Heart left ventricle (tissue), 16 donors: ENCODE measurements at regions of chrX and their contacts with region 1.

Region 1: DNA sequence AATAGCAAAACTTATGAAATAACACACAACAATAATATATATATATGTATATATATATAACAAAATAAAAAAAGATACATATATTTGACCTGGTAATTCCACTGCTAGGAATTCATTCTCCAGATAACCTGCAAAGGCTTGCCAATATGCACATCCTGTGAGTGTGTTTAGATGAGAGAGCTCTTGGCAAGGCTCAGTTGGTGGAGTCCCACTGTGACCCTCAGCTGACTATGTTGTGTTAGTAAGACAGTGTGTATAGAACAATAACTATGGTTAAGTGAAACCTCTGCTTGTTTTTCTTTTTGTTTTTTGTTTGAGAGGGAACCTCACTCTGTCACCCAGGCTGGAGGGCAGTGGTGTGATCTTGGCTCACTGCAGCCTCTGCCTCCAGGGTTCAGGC is 39.5 kb upstream of the RBMX start:
- DNase-seq: no peak
- ATAC-seq: peak in 2 of 4 donors; percentile 48 to 49
- H3K4me3 ChIP-seq: no peak overlapping the region
- H3K27ac ChIP-seq: no peak overlapping the region
- H3K4me1 ChIP-seq: peaks cover 0 to 3% (median 0%) of the 10 kb centered on the region in 12 donors
- H3K27me3 ChIP-seq: no peaks in the 10 kb centered on the region
- CTCF ChIP-seq: no peak
- POLR2A ChIP-seq: no peak

Region 2: GRCh38 chrX:136608295-136609171 is 311.5 kb before region 1 on chrX:
- intact Hi-C with region 1: loop called in 4 of 10 experiments (anchors 10 kb)
- DNase-seq: peak; percentile 8 to 62 (median 33)
- ATAC-seq: peak in 2 of 4 donors; percentile 51 to 55
- H3K4me3 ChIP-seq: no peak overlapping the region
- H3K27ac ChIP-seq: no peak overlapping the region
- H3K4me1 ChIP-seq: no peaks in the 10 kb centered on the region
- H3K27me3 ChIP-seq: peaks cover 0 to 4% (median 0%) of the 10 kb centered on the region in 9 donors
- CTCF ChIP-seq: peak in 8 of 12 donors; percentile 6 to 41 (median 26)
- POLR2A ChIP-seq: no peak

Region 3: GRCh38 chrX:136889269-136889668 is 30.7 kb before region 1 on chrX:
- intact Hi-C with region 1: loop called in 1 of 10 experiments (anchors 5 kb)
- DNase-seq: no peak
- ATAC-seq: no peak
- H3K4me3 ChIP-seq: no peak overlapping the region
- H3K27ac ChIP-seq: no peak overlapping the region
- H3K4me1 ChIP-seq: no peaks in the 10 kb centered on the region
- H3K27me3 ChIP-seq: no peaks in the 10 kb centered on the region
- CTCF ChIP-seq: no peak
- POLR2A ChIP-seq: no peak

Region 4: GRCh38 chrX:137062915-137063617 is 143.1 kb after region 1 on chrX:
- intact Hi-C with region 1: no loop called
- DNase-seq: no peak
- ATAC-seq: no peak
- H3K4me3 ChIP-seq: no peak overlapping the region
- H3K27ac ChIP-seq: no peak overlapping the region
- H3K4me1 ChIP-seq: no peaks in the 10 kb centered on the region
- H3K27me3 ChIP-seq: peaks cover 0 to 16% (median 0%) of the 10 kb centered on the region in 9 donors
- CTCF ChIP-seq: no peak
- POLR2A ChIP-seq: no peak

Region 5: GRCh38 chrX:137297166-137297565 is 377.2 kb after region 1 on chrX:
- intact Hi-C with region 1: no loop called
- DNase-seq: no peak
- ATAC-seq: no peak
- H3K4me3 ChIP-seq: no peak overlapping the region
- H3K27ac ChIP-seq: no peak overlapping the region
- H3K4me1 ChIP-seq: no peaks in the 10 kb centered on the region
- H3K27me3 ChIP-seq: peaks cover 0 to 3% (median 0%) of the 10 kb centered on the region in 9 donors
- CTCF ChIP-seq: no peak
- POLR2A ChIP-seq: no peak